ENCODE measurements at regions of chr11 and their contacts with region 1.

Region 1: GRCh38 chr11:128603752-128604414 is 16.5 kb upstream of the ETS1 start:
- DNase-seq: no peak
- H3K4me3 ChIP-seq: no peak overlapping the region
- H3K27ac ChIP-seq: no peak overlapping the region
- H3K4me1 ChIP-seq: no peaks in the 10 kb centered on the region
- H3K27me3 ChIP-seq: no peaks in the 10 kb centered on the region
- CTCF ChIP-seq: no peak
- EP300 ChIP-seq: no peak
- POLR2A ChIP-seq: no peak

Region 2: DNA sequence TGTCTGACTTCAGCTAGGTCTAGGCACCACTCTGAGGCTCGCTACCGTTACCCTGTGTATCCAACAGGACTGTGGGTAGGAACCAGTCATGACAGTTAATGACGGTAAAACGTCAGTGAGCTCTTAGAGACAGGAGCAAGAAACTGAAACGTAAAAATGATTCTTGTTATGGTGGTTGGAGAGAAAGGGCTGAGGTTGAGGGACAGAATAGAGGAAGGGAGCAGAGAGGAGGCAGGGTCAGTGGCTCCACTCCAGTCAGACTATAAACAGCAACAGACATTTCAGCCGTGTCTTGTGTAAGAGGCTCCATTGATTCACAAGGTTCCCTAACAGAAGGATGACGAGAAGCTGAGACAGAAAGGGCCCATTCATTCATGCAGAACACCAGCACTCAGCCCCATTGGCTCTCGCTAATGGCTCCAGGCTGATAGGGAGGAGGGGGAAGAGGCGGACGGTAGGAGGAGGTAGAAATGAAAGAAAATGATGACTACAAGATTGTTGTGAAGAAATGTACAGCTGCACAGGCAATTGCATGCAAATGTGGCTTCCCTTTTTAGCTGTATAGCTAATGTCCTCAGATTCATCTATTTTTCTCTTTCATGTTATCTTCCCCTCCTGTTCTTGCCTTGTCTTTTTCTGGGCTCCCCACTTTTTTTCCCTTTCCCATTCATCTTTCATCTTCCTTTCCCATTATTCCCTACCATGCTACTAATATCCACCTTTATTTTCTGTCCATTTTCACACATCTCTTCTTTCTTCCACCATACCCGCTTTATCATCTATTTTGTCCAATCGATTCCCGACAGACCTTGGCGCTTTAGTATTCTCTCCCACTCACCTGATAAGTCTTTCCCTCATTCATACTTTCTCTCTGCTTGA is 50.9 kb before region 1 on chr11:
- intact Hi-C with region 1: loop called (anchors 10 kb)
- DNase-seq: no peak
- H3K4me3 ChIP-seq: no peak overlapping the region
- H3K27ac ChIP-seq: peak overlapping the region; percentile 19 to 70 (median 52)
- H3K4me1 ChIP-seq: peaks cover 0 to 30% (median 26%) of the 10 kb centered on the region in 4 donors
- H3K27me3 ChIP-seq: no peaks in the 10 kb centered on the region
- CTCF ChIP-seq: no peak
- EP300 ChIP-seq: no peak
- POLR2A ChIP-seq: no peak